PC-3 (cell line): ENCODE measurements at regions of chr22 and their contacts with region 1.

Region 1: GRCh38 chr22:23904573-23905260 is 10.5 kb downstream of the MIF start:
- DNase-seq: no peak
- ATAC-seq: no peak
- H3K4me3 ChIP-seq: no peak overlapping the region
- H3K27ac ChIP-seq: no peak overlapping the region
- H3K4me1 ChIP-seq: no peaks in the 10 kb centered on the region
- H3K27me3 ChIP-seq: no peaks in the 10 kb centered on the region
- CTCF ChIP-seq: no peak

Region 2: DNA sequence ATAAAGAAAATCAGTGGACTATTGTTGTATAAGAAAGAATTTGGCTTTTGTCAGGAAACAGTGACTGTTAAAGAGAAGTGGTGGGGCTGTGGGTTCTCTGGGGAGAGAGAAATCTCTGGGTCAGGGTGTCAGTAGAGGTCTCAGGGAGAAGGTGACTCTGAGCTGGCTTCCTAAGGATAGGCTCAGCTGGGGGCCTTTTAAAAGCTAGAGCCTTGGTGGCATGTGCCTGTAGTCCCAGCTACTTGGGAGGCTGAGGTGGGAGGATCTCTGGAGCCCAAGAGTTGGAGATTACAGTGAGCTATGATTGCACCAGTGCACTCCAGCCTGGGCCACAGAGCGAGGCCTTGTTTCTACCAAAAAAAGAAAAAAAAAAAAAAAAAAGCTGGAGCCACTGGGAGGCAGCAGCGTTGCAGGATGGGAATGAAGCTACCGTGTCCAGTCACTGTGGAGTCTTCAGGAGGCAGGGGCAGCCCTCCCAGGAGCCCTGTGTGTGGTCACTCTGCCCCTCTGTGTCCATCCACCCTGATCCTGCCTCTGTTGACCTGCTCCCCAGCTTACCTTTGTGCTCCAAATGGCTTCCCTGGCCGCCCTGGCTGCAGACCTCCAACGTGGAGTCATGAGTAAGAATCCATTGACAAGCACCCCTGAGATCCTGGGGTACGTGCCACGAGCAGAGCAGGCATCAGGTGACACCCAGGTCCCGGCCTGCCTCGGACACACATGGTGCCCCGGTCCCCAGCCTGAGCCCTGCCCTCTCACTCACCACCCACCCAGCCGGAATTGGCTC is 15.9 kb before region 1 on chr22:
- CTCF ChIA-PET with region 1: no interaction called
- POLR2A ChIA-PET with region 1: interaction called, 10 read pairs
- intact Hi-C with region 1: no loop called
- DNase-seq: peak; percentile 11
- ATAC-seq: peak; percentile 21
- H3K4me3 ChIP-seq: no peak overlapping the region
- H3K27ac ChIP-seq: peak overlapping the region; percentile 71
- H3K4me1 ChIP-seq: peaks cover 15% of the 10 kb centered on the region
- H3K27me3 ChIP-seq: no peaks in the 10 kb centered on the region
- CTCF ChIP-seq: peak; percentile 23; the same call in 1 of the 2 replicates